K562 (cell line): ENCODE measurements at regions of chr3 and their contacts with region 1.

Region 1: GRCh38 chr3:45852828-45853227 is 10.9 kb upstream of the LZTFL1 start:
- DNase-seq: no peak
- ATAC-seq: no peak
- H3K4me3 ChIP-seq: no peak overlapping the region
- H3K27ac ChIP-seq: no peak overlapping the region
- H3K4me1 ChIP-seq: no peaks in the 10 kb centered on the region
- H3K27me3 ChIP-seq: peaks cover 16 to 20% of the 10 kb centered on the region in 2 experiments
- CTCF ChIP-seq: no peak
- EP300 ChIP-seq: no peak
- POLR2A ChIP-seq: no peak
- RAD21 ChIP-seq: no peak

Region 2: GRCh38 chr3:45841757-45842491 is 10.9 kb before region 1 on chr3 and contains the start of gene LZTFL1:
- CTCF ChIA-PET with region 1: no interaction called
- POLR2A ChIA-PET with region 1: interaction called, 10 read pairs
- in situ Hi-C with region 1: no loop called
- intact Hi-C with region 1: no loop called
- DNase-seq: peak; percentile 85 to 94 (median 90)
- ATAC-seq: peak; percentile 98
- H3K4me3 ChIP-seq: peak within 1 kb of the TSS; percentile 64
- H3K27ac ChIP-seq: peak within 1 kb of the TSS; percentile 24; the same call in 1 of the 3 replicates
- H3K4me1 ChIP-seq: peaks cover 0 to 10% of the 10 kb centered on the region in 2 experiments; a peak in 3 of 5 replicates
- H3K27me3 ChIP-seq: no peaks in the 10 kb centered on the region; a peak in 1 of 5 replicates
- CTCF ChIP-seq: no peak
- EP300 ChIP-seq: no peak; the same call in 1 of the 2 replicates
- POLR2A ChIP-seq: peak; percentile 35; the same call in 1 of the 2 replicates
- RAD21 ChIP-seq: no peak
- polyA plus RNA-seq, gene LZTFL1: 10.7 to 17.3 TPM